PC-3 (cell line): ENCODE measurements at regions of chr2 and their contacts with region 1.

Region 1: GRCh38 chr2:44087036-44087713 is 81.5 kb upstream of the PPM1B start:
- DNase-seq: peak; percentile 84
- ATAC-seq: peak; percentile 97
- H3K4me3 ChIP-seq: peak overlapping the region; percentile 62
- H3K27ac ChIP-seq: no peak overlapping the region
- H3K4me1 ChIP-seq: peaks cover 6% of the 10 kb centered on the region
- H3K27me3 ChIP-seq: no peaks in the 10 kb centered on the region
- CTCF ChIP-seq: peak; percentile 96

Region 2: GRCh38 chr2:44244129-44244871 is 157.1 kb after region 1 on chr2:
- CTCF ChIA-PET with region 1: interaction called, 3 read pairs
- POLR2A ChIA-PET with region 1: no interaction called
- intact Hi-C with region 1: loop called (anchors 2 kb)
- DNase-seq: peak; percentile 79
- ATAC-seq: peak; percentile 49
- H3K4me3 ChIP-seq: peak overlapping the region; percentile 78
- H3K27ac ChIP-seq: peak overlapping the region; percentile 8; the same call in 1 of the 2 replicates
- H3K4me1 ChIP-seq: peaks cover 21% of the 10 kb centered on the region
- H3K27me3 ChIP-seq: no peaks in the 10 kb centered on the region
- CTCF ChIP-seq: peak; percentile 50

Region 3: GRCh38 chr2:44291281-44292248 is 204.4 kb after region 1 on chr2:
- CTCF ChIA-PET with region 1: interaction called, 4 read pairs
- POLR2A ChIA-PET with region 1: no interaction called
- intact Hi-C with region 1: loop called (anchors 1 kb)
- DNase-seq: peak; percentile 93
- ATAC-seq: peak; percentile 81
- H3K4me3 ChIP-seq: peak overlapping the region; percentile 28; the same call in 1 of the 2 replicates
- H3K27ac ChIP-seq: peak overlapping the region; percentile 80
- H3K4me1 ChIP-seq: peaks cover 40% of the 10 kb centered on the region
- H3K27me3 ChIP-seq: no peaks in the 10 kb centered on the region
- CTCF ChIP-seq: peak; percentile 85

Region 4: GRCh38 chr2:44342854-44343253 is 255.7 kb after region 1 on chr2:
- CTCF ChIA-PET with region 1: no interaction called
- POLR2A ChIA-PET with region 1: no interaction called
- intact Hi-C with region 1: loop called (anchors 1 kb)
- DNase-seq: peak; percentile 55
- ATAC-seq: peak; percentile 49; the same call in 1 of the 2 replicates
- H3K4me3 ChIP-seq: no peak overlapping the region
- H3K27ac ChIP-seq: no peak overlapping the region
- H3K4me1 ChIP-seq: no peaks in the 10 kb centered on the region
- H3K27me3 ChIP-seq: no peaks in the 10 kb centered on the region
- CTCF ChIP-seq: peak; percentile 74

Region 5: GRCh38 chr2:44392338-44392943 is 305.3 kb after region 1 on chr2:
- CTCF ChIA-PET with region 1: no interaction called
- POLR2A ChIA-PET with region 1: no interaction called
- intact Hi-C with region 1: loop called (anchors 5 kb)
- DNase-seq: peak; percentile 73
- ATAC-seq: no peak
- H3K4me3 ChIP-seq: no peak overlapping the region
- H3K27ac ChIP-seq: no peak overlapping the region
- H3K4me1 ChIP-seq: no peaks in the 10 kb centered on the region
- H3K27me3 ChIP-seq: no peaks in the 10 kb centered on the region
- CTCF ChIP-seq: peak; percentile 72